ENCODE measurements at regions of chr10 and their contacts with region 1.

Region 1: DNA sequence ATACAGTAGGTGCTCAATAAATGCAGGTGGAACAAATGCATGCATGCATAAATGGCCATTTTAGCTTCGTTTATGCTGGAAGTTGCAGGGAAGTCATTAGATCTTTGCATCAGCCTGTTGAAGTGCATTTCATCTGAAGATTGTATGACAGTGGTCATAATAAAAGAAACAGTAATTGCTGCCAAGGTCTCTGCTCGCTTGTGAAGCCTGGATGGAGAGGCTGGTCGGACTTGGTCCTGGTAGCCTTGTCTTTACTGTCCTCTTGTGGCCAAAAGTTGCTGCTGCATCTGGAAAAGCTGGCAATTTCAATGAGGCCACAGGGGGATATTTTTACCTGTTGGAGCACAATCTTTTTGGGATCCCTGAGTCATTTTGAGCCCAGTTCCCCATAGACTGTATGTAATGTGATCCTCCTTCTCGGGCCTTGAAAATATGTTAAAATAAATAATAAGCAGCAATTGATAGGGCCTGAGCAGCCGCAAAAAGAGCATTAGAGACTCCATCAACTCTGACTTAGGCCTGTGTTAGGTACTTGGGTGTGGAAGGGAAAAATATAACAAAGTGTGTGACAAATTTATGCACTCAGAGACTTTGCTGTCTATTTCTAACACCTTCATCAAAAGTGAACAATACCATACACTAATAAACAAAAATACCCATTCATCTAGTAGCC is 31.6 kb upstream of the HABP2 start:
- DNase-seq: peak in 1 of 2 donors; percentile 81
- ATAC-seq: peak; percentile 82
- H3K4me3 ChIP-seq: no peak overlapping the region
- H3K27ac ChIP-seq: no peak overlapping the region
- H3K4me1 ChIP-seq: peaks cover 5 to 8% of the 10 kb centered on the region in 2 donors
- H3K27me3 ChIP-seq: no peaks in the 10 kb centered on the region

Region 2: DNA sequence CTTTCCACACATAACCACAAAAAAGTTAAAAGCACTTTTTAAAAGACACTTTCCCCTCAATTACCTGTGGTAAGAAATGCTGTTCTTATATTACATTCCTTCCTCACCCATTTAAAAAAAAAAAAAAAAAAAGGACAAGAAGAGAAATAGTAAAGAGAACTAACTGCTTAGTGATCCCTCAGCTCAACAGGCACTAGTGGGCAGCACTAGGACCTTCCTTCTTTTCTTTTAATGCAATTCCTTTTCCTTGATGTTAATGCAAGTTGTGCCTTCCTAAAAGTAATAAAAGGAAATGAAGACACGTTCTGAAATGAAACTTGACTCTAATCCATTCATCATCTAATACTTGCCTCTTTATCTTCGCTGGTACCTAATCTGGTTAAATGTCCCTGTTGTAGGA is 381.6 kb before region 1 on chr10:
- intact Hi-C with region 1: loop called in 1 of 2 experiments (anchors 10 kb)
- DNase-seq: no peak
- ATAC-seq: no peak
- H3K4me3 ChIP-seq: no peak overlapping the region
- H3K27ac ChIP-seq: no peak overlapping the region
- H3K4me1 ChIP-seq: no peaks in the 10 kb centered on the region
- H3K27me3 ChIP-seq: no peaks in the 10 kb centered on the region

Region 3: GRCh38 chr10:113441220-113441619 is 80.0 kb before region 1 on chr10:
- intact Hi-C with region 1: loop called in 1 of 2 experiments (anchors 1 kb)
- DNase-seq: no peak
- ATAC-seq: no peak
- H3K4me3 ChIP-seq: no peak overlapping the region
- H3K27ac ChIP-seq: no peak overlapping the region
- H3K4me1 ChIP-seq: no peaks in the 10 kb centered on the region
- H3K27me3 ChIP-seq: no peaks in the 10 kb centered on the region

Region 4: DNA sequence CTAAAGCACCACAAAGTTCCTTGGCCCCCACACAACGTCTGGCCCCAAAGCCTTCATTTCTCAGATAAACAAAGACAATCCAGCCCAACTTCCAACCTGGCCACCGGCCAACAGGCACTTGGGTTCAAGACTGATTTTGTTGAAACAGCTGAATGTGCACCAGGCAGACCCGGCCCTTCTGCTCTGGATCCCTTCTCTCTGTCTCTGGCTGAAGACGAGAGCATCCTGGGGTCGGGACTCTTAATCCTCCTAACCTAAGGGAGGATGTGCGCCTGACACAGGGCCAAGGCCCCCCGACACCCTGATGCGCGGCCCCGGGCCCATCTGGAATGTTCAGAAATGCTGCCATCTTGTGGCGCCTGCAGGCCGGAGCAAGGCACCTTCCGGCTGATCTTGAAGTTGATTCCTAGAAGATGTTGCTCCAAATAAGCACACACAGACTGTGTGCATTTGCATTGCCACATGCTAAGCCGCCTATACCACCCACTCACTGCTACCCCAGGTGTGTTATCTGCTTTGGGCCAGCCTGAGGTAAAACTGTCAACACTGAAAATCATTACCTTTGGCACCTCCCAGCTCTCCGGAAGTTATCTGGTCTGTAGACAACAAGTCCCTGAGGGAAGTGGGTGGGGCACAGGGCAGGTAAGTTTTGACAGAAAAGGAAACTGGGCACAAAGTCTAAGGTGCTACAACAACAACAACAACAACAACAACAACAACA is 66.8 kb before region 1 on chr10:
- intact Hi-C with region 1: loop called in 1 of 2 experiments (anchors 5 kb)
- DNase-seq: peak; percentile 61 to 82
- ATAC-seq: peak; percentile 80
- H3K4me3 ChIP-seq: peak overlapping the region in 1 of 2 donors; percentile 30
- H3K27ac ChIP-seq: no peak overlapping the region
- H3K4me1 ChIP-seq: no peaks in the 10 kb centered on the region
- H3K27me3 ChIP-seq: no peaks in the 10 kb centered on the region